ENCODE measurements at regions of chr17 and their contacts with region 1.

Region 1: DNA sequence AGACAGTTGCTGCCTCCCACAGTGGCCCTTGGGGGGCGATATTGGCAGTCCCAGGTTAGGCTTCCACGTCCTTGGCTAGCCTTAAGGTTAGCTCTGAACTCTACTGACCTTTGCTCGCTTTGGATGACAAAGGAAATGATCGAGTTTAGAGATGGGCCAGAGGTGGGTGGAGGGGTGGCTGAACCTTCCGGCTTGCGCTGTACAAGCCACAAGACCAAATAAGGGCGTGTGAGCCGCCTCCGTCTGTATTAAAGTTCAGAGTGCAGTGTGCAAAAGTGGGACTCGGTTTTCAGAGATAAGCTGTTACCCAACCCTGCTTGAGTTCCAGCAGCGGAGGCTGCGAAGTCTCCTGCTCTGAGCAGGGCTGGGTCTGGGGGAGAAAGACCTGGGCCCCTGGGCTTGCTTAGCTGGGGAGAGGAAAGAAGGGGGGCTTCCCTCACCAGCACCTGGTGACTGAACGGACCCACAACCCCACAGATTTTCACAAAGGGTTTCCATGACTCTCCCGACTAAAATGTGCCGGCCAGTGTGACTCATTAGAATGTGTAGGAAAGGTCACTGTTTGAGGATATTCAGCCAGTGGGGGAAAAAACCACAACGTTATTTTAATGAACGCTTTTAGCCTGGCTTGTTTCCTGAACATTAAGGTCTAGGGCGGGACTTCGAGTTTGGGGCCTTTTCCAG is 67.2 kb downstream of the CENPV start:
- DNase-seq: peak; percentile 96
- H3K4me3 ChIP-seq: peak overlapping the region in 1 of 3 experiments; percentile 16
- H3K27ac ChIP-seq: peak overlapping the region; percentile 96
- H3K4me1 ChIP-seq: peaks cover 55% of the 10 kb centered on the region
- H3K27me3 ChIP-seq: no peaks in the 10 kb centered on the region
- CTCF ChIP-seq: peak; percentile 54 to 56
- POLR2A ChIP-seq: peak; percentile 83

Region 2: GRCh38 chr17:16027708-16028584 is 258.2 kb before region 1 on chr17:
- CTCF ChIA-PET with region 1: no interaction called
- POLR2A ChIA-PET with region 1: no interaction called
- dilution Hi-C with region 1: no loop called
- intact Hi-C with region 1: loop called (anchors 10 kb)
- DNase-seq: peak; percentile 87
- H3K4me3 ChIP-seq: peak overlapping the region in 1 of 3 experiments; percentile 26
- H3K27ac ChIP-seq: peak overlapping the region; percentile 97
- H3K4me1 ChIP-seq: peaks cover 40% of the 10 kb centered on the region
- H3K27me3 ChIP-seq: no peaks in the 10 kb centered on the region
- CTCF ChIP-seq: no peak
- POLR2A ChIP-seq: peak; percentile 36

Region 3: DNA sequence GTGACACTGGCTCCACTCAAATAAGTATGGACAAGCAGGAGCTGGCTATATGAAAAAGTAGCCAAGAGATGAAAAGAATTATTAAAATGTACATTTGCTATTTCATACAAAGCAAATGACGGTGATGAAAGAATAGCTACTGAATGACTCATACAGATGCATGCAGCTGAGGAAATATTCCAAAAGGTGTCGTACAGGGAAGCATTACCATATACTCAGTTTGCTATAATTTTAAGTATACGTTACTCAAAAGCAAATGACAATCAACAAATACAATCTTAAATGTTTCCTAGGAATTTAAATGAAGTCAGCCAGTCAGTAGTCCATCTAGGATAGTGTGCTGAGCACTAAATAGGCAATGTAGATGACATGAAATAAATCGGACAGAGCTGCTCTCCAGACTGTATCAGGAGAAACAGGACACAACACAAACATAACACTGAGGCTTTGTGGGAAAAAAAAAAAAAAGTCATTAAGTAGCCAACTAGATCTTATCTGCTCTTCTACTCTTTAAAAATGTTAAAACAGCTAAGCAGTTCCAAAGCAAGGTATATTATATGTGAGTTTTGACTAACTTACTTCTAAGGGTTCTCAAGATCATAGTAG is 135.7 kb before region 1 on chr17:
- CTCF ChIA-PET with region 1: no interaction called
- POLR2A ChIA-PET with region 1: no interaction called
- dilution Hi-C with region 1: no loop called
- intact Hi-C with region 1: loop called (anchors 10 kb)
- DNase-seq: peak; percentile 80
- H3K4me3 ChIP-seq: no peak overlapping the region
- H3K27ac ChIP-seq: peak overlapping the region; percentile 67
- H3K4me1 ChIP-seq: peaks cover 14% of the 10 kb centered on the region
- H3K27me3 ChIP-seq: no peaks in the 10 kb centered on the region
- CTCF ChIP-seq: no peak
- POLR2A ChIP-seq: no peak

Region 4: GRCh38 chr17:16215273-16215964 is 70.7 kb before region 1 on chr17 and contains the start of gene NCOR1:
- CTCF ChIA-PET with region 1: interaction called, 13 read pairs
- POLR2A ChIA-PET with region 1: no interaction called
- dilution Hi-C with region 1: no loop called
- intact Hi-C with region 1: loop called (anchors 1 kb)
- DNase-seq: peak; percentile 90
- H3K4me3 ChIP-seq: peak within 1 kb of the TSS; percentile 78 to 98 (median 96)
- H3K27ac ChIP-seq: peak within 1 kb of the TSS; percentile 84
- H3K4me1 ChIP-seq: peaks cover 22% of the 10 kb centered on the region
- H3K27me3 ChIP-seq: no peaks in the 10 kb centered on the region
- CTCF ChIP-seq: peak; percentile 14 to 40
- POLR2A ChIP-seq: peak; percentile 92
- total RNA-seq, gene NCOR1: 134 and 140 TPM in 2 replicates

Region 5: DNA sequence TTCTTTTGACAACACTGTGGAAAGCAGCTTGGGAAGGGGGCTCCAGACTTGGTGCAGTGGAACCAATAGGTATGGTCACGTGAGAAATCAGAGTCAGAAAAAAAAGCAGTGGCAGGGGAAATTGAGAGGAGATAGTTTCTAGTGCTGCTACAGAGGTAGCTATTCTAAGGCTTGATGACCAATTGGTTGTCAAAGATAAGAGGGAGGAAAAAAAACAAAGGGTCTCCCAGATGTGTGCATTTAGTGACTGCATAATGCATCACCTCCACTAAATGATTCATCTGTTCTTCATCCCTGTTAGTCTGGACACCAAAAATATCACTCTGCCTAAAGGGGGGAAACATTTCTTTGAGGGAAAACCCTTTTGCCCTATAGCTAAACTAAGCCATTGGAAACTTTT is 12.6 kb before region 1 on chr17:
- CTCF ChIA-PET with region 1: interaction called, 21 read pairs
- POLR2A ChIA-PET with region 1: no interaction called
- dilution Hi-C with region 1: no loop called
- intact Hi-C with region 1: loop called (anchors 1 kb)
- DNase-seq: peak; percentile 32
- H3K4me3 ChIP-seq: no peak overlapping the region
- H3K27ac ChIP-seq: no peak overlapping the region
- H3K4me1 ChIP-seq: peaks cover 21% of the 10 kb centered on the region
- H3K27me3 ChIP-seq: no peaks in the 10 kb centered on the region
- CTCF ChIP-seq: no peak
- POLR2A ChIP-seq: no peak

Region 6: DNA sequence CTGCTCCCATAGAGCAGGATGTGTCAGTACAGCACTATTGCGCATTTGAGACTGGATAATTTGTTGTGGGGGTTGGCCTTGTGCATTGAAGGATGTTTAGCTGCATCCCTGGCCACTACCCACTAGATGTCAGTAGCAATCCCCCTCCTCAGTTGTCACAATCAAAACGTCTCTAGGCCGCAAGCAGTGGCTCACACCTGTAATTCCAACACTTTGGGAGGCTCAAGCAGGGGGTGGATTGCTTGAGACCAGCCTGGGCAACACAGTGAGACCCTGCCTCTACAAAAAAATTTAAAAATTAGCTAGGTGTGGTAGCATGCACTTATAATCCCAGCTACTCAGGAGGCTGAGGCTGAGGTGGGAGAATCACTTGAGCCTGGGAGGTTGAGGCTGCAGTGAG is 18.7 kb after region 1 on chr17:
- CTCF ChIA-PET with region 1: interaction called, 14 read pairs
- POLR2A ChIA-PET with region 1: no interaction called
- dilution Hi-C with region 1: no loop called
- intact Hi-C with region 1: no loop called
- DNase-seq: peak; percentile 40
- H3K4me3 ChIP-seq: no peak overlapping the region
- H3K27ac ChIP-seq: no peak overlapping the region
- H3K4me1 ChIP-seq: no peaks in the 10 kb centered on the region
- H3K27me3 ChIP-seq: no peaks in the 10 kb centered on the region
- CTCF ChIP-seq: peak; percentile 24 to 61
- POLR2A ChIP-seq: no peak

Region 7: DNA sequence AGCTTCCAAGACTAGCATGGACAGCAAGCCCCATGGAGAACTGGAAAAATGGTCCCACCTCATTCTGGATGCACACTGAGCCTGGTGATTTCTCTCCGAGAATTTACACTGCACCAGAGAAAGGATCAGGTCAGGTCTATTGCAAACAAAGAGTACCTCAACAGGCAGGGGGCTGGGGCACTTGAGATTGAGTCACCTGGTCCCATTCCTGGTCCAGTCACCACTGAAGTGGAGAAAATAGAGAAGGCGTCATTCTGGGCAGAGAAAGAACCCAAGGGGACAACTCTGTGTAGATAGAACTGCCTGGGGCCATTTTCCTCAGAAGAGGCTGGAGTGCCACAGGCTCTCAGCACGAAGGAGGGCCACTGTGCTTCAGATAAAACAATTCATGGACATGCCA is 28.8 kb after region 1 on chr17:
- CTCF ChIA-PET with region 1: no interaction called
- POLR2A ChIA-PET with region 1: no interaction called
- dilution Hi-C with region 1: no loop called
- intact Hi-C with region 1: no loop called
- DNase-seq: no peak
- H3K4me3 ChIP-seq: no peak overlapping the region
- H3K27ac ChIP-seq: no peak overlapping the region
- H3K4me1 ChIP-seq: no peaks in the 10 kb centered on the region
- H3K27me3 ChIP-seq: no peaks in the 10 kb centered on the region
- CTCF ChIP-seq: no peak
- POLR2A ChIP-seq: no peak

Region 8: DNA sequence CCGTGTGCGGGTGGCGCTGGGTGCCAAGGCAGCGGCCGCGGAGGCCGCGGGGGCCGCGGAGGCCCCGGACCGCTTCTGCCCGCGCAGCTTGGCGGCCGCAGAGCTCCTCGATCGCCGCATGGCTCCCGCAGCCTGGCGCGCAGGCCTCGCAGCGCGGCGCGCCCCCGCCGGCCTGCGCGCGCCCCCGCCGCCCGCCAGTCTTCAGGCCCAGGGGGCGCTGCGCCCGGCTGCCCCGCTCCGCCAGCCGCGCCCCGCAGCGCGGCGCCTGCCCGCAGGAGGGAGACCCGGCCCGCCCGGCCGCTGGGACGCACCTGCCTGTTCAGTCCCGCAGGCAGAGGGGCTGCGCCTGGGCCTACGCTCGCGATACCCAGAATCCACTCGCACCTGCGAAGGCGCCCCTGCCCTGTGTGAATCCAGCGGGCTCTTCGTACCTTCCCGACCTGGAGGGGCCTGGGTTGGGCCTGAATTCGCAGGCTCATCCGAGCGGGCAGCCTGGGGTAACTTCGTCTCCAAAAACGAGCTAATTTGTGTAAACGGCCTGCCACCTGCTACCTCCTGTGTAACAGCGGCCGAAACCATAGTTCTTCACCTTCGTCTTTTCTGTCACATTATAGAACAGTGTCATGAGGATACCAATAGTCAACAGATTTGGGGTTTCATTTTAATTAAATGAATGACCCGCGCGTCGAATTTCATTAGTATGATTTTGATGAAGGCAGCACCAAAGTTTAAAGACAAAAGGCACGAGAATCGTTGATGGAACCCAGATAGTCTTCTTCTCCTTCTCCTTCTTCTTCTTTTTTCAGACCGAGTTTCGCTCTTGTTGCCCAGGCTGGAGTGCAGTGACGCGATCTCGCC is 67.4 kb after region 1 on chr17 and contains the start of gene CENPV:
- CTCF ChIA-PET with region 1: interaction called, 8 read pairs
- POLR2A ChIA-PET with region 1: no interaction called
- dilution Hi-C with region 1: no loop called
- intact Hi-C with region 1: loop called (anchors 1 kb)
- DNase-seq: peak; percentile 47
- H3K4me3 ChIP-seq: peak within 1 kb of the TSS; percentile 48 to 60 (median 49)
- H3K27ac ChIP-seq: peak within 1 kb of the TSS; percentile 2
- H3K4me1 ChIP-seq: peaks cover 10% of the 10 kb centered on the region
- H3K27me3 ChIP-seq: no peaks in the 10 kb centered on the region
- CTCF ChIP-seq: peak in 1 of 2 donors; percentile 9
- POLR2A ChIP-seq: no peak
- total RNA-seq, gene CENPV: 41.6 and 44.0 TPM in 2 replicates

Measured in endothelial cell of umbilical vein (primary cell).